B cell (primary cell): ENCODE measurements at regions of chr2 and their contacts with region 1.

Region 1: GRCh38 chr2:84881581-84882414 is 914 bp upstream of the TRABD2A start:
- DNase-seq: peak; percentile 90
- ATAC-seq: peak; percentile 78
- H3K4me3 ChIP-seq: peak overlapping the region; percentile 66 to 98 (median 83)
- H3K4me3 Mint-ChIP-seq: peak overlapping the region; percentile 92
- H3K27ac ChIP-seq: peak overlapping the region; percentile 72 to 92
- H3K27ac Mint-ChIP-seq: peak overlapping the region; percentile 95
- H3K4me1 ChIP-seq: peaks cover 16 to 31% of the 10 kb centered on the region in 2 donors
- H3K4me1 Mint-ChIP-seq: peaks cover 36% of the 10 kb centered on the region
- H3K27me3 ChIP-seq: no peaks in the 10 kb centered on the region
- H3K27me3 Mint-ChIP-seq: no peaks in the 10 kb centered on the region
- CTCF ChIP-seq: peak; percentile 78

Region 2: DNA sequence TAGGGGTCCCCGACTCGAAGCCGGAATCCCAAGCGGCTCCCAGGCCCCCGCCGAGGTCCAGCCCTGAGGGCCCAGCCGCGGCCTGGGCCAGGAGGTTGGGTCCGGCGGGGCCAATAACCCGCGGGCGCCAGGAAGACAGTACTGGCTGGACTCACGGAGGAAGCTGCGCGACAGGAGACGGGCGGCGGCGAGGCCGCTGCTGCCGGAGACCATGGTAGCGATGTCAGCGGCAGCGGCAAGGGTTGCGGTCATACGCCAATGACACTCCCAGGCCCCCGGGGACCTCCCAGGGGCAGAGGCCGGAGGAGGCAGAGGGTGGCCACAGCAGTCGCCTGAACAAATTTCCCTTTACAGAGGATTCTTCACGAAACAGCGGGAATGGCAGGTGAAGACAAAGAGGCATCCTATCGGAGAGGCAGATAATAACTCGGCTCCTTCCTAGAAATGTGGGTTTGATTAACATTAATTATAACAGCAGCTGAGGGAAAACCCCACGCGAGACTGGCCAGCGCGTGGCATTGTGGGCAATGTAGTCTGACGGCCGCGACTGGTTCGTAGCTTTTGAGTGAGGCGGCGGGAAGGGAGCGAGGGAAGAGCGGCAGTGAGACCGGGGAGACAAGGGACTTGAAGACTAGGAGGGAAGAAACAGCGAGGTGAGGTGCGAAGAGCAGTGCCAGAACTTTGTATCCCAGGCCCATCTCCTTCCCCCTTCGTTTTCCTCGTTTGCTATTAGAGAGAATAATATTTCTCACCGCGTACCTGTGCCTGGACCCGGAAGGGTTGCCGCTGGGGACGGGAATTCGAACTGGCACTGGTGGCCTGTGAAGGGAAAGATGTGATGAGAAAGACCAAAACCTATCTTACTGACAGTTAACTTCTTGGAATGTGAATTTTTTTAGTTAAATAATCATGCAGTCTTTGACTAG is 422.5 kb before region 1 on chr2 and contains the start of gene SUCLG1:
- CTCF ChIA-PET with region 1: interaction called, 3 read pairs
- POLR2A ChIA-PET with region 1: no interaction called
- intact Hi-C with region 1: loop called (anchors 2 kb)
- DNase-seq: peak; percentile 94
- ATAC-seq: peak; percentile 97
- H3K4me3 ChIP-seq: peak within 1 kb of the TSS; percentile 67 to 95 (median 91)
- H3K4me3 Mint-ChIP-seq: peak within 1 kb of the TSS; percentile 93
- H3K27ac ChIP-seq: peak within 1 kb of the TSS; percentile 84 to 93
- H3K27ac Mint-ChIP-seq: peak within 1 kb of the TSS; percentile 97
- H3K4me1 ChIP-seq: peaks cover 20 to 23% of the 10 kb centered on the region in 2 donors
- H3K4me1 Mint-ChIP-seq: peaks cover 37% of the 10 kb centered on the region
- H3K27me3 ChIP-seq: no peaks in the 10 kb centered on the region
- H3K27me3 Mint-ChIP-seq: no peaks in the 10 kb centered on the region
- CTCF ChIP-seq: no peak
- total RNA-seq, gene SUCLG1: 31.8 and 33.6 TPM in 2 replicates

Region 3: GRCh38 chr2:84516234-84516986 is 365.4 kb before region 1 on chr2 and contains the start of gene DNAH6:
- CTCF ChIA-PET with region 1: interaction called, 4 read pairs
- POLR2A ChIA-PET with region 1: no interaction called
- intact Hi-C with region 1: loop called (anchors 1 kb)
- DNase-seq: peak; percentile 88
- ATAC-seq: peak; percentile 98
- H3K4me3 ChIP-seq: peak within 1 kb of the TSS; percentile 14 to 64 (median 45)
- H3K4me3 Mint-ChIP-seq: peak within 1 kb of the TSS; percentile 86
- H3K27ac ChIP-seq: no peak within 1 kb of the TSS
- H3K27ac Mint-ChIP-seq: peak within 1 kb of the TSS; percentile 70
- H3K4me1 ChIP-seq: peaks cover 4 to 9% of the 10 kb centered on the region in 2 donors
- H3K4me1 Mint-ChIP-seq: peaks cover 12% of the 10 kb centered on the region
- H3K27me3 ChIP-seq: peaks cover 0 to 14% (median 11%) of the 10 kb centered on the region in 4 experiments
- H3K27me3 Mint-ChIP-seq: peaks cover 17% of the 10 kb centered on the region
- CTCF ChIP-seq: no peak
- total RNA-seq, gene DNAH6: 1.9 TPM in 2 replicates

Region 4: DNA sequence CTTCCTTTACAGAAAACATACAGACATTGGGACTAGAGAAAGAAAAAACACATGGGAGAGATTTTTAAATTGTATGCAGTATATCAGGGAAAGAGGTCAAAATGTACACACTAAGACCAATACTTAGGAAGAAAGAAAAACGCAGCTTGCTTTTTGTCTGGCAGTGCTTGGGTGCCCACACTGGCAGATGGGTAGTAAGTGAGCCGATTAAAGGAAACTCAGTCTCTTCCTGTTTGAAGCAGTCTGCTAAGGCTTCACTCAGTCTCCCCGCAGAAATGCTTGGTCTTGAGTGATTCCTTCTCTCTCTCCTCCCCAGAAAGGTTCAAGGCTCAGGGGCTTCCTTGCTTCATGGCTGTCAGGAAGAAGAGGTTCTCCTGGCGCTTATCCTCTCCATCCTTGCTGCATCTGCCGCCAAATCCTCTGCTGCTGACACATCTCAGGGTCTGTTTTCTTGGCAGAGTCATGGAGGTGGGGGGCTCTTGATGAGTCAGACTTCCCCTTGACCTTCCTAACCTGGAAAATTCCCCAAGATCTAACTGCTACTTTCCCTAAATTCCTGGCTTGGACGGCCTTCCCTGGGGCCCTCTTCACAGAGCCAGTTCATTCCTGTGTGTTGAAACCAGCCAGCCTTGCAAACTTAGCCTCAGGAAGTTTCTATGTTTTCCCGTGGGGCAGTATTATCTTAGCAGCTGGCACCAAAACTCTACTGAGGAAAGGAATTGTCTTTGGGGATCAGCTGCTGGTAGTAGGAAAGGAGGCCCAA is 13.1 kb after region 1 on chr2:
- CTCF ChIA-PET with region 1: interaction called, 24 read pairs
- POLR2A ChIA-PET with region 1: interaction called, 4 read pairs
- intact Hi-C with region 1: no loop called
- DNase-seq: peak; percentile 67
- ATAC-seq: peak; percentile 61
- H3K4me3 ChIP-seq: peak overlapping the region in 4 of 5 experiments; percentile 3 to 46 (median 32)
- H3K4me3 Mint-ChIP-seq: peak overlapping the region; percentile 20
- H3K27ac ChIP-seq: peak overlapping the region; percentile 78 to 91
- H3K27ac Mint-ChIP-seq: peak overlapping the region; percentile 85
- H3K4me1 ChIP-seq: peaks cover 38 to 42% of the 10 kb centered on the region in 2 donors
- H3K4me1 Mint-ChIP-seq: peaks cover 49% of the 10 kb centered on the region
- H3K27me3 ChIP-seq: no peaks in the 10 kb centered on the region
- H3K27me3 Mint-ChIP-seq: no peaks in the 10 kb centered on the region
- CTCF ChIP-seq: no peak

Region 5: DNA sequence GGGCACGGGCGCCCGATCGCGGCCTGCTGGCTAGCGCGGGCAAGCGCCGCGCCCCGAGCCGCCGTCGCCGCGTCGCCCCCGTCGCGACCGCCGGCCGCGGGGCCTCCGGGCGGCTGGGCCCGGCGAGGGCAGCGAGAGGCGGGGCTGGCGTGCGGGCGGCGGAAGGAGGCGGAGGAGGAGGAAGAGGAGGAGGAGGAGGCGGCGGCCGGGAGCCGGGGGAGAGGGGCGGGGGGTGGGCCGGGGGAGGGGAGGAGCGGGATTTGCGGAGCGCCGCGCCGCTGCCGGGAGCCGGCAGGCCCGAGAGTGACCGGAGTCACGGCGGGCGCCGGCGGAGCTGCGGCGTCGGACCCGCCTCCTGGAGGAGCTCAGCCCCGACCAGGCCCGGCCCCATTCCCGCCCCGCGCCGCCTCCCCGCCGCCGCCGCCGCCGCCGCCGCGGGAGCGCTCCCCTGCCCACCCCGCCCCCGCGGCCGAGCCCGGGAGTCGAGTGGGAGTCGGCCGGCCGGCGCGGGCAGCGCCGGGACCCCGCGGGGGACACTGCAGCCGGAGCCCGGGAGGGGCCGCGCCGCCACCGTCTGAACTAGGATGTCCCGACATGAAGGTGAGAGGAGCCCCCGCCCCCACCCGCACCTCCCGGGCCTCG is 89.2 kb after region 1 on chr2 and contains the start of gene KCMF1:
- CTCF ChIA-PET with region 1: interaction called, 7 read pairs
- POLR2A ChIA-PET with region 1: interaction called, 4 read pairs
- intact Hi-C with region 1: loop called (anchors 1 kb)
- DNase-seq: no peak
- ATAC-seq: peak; percentile 56
- H3K4me3 ChIP-seq: peak within 1 kb of the TSS; percentile 85 to 97 (median 92)
- H3K4me3 Mint-ChIP-seq: peak within 1 kb of the TSS; percentile 98
- H3K27ac ChIP-seq: peak within 1 kb of the TSS; percentile 74 to 96
- H3K27ac Mint-ChIP-seq: peak within 1 kb of the TSS; percentile 97
- H3K4me1 ChIP-seq: peaks cover 42 to 48% of the 10 kb centered on the region in 2 donors
- H3K4me1 Mint-ChIP-seq: peaks cover 56% of the 10 kb centered on the region
- H3K27me3 ChIP-seq: no peaks in the 10 kb centered on the region
- H3K27me3 Mint-ChIP-seq: no peaks in the 10 kb centered on the region
- CTCF ChIP-seq: no peak
- total RNA-seq, gene KCMF1: 73.1 and 81.5 TPM in 2 replicates

Region 6: DNA sequence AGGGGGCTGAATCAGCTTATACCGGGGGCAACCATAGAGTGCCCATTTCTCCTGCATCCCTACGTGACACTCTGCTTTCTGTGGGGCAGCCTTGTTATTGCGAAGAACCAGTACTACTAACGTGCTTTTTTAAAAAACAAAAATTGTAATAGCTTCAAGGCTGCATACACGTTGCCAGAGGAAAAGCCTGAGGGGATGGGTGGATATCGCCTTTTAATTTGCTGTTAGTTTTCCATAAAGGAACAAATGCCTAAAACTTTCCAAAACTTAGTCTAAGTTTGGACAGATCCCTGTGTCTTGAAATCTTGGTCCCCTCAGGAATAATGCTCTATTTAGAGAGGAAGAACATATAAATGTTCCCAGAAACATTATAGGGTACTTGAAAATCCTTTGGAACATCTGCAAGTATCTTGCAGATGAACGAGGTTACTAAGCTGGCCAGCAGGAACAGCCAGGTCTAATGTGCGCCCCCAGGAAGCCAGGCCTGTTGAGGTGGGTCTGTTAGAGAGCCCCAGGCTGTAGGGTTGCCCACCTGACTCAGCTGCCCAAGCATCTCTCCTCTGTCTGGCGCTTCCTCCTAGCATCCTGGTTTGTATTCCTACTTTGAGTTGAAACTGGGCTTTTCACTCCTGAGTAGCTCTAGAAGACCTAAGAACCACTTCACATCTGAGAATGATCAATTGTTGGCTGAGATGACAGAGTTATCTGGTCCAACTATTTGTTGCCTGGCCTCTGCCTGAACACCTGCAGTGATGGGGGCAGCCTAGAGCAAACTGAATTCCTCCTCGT is 349.1 kb after region 1 on chr2:
- CTCF ChIA-PET with region 1: no interaction called
- POLR2A ChIA-PET with region 1: no interaction called
- intact Hi-C with region 1: no loop called
- DNase-seq: no peak
- ATAC-seq: no peak
- H3K4me3 ChIP-seq: no peak overlapping the region
- H3K4me3 Mint-ChIP-seq: no peak overlapping the region
- H3K27ac ChIP-seq: no peak overlapping the region
- H3K27ac Mint-ChIP-seq: no peak overlapping the region
- H3K4me1 ChIP-seq: no peaks in the 10 kb centered on the region
- H3K4me1 Mint-ChIP-seq: no peaks in the 10 kb centered on the region
- H3K27me3 ChIP-seq: peaks cover 0 to 6% (median 0%) of the 10 kb centered on the region in 4 experiments
- H3K27me3 Mint-ChIP-seq: peaks cover 23% of the 10 kb centered on the region
- CTCF ChIP-seq: no peak